GM12878 (cell line): ENCODE measurements at regions of chr19 and their contacts with region 1.

Region 1: DNA sequence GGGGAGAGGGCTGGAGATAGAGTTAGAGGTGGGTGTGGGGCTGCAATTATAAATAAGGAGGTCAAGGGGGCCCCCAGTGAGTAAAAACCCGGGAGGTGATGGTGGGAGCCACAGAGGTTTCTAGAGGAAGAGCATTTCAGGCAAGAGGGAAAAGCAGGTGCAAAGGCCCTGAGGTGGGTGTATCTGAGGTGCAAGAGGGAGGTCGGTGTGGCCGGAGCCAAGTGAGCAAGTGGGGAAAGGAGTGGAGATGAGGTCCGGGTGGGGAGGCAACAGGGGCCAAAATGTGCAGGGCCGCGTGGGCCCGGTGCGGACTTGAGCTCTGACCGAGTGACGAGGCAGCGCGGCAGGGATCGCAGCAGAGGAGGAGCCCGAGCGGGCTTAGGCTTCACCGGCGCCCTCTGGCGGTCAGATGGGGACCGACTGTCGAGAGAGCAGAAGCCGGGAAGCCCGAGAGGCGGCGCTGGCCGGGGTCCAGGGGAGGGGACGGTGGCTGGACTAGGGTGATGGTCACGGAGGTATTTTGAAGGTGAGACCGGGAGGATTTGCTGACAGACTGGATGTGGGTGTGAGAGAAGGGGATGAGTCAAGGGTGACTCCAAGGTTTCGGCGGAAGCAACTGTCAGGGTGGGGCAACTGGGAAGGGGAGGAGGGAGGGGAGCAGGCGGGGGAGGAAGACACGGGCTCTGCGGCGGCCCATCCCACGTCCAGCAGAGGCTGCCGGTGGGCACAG is 17.7 kb upstream of the SPACA4 start:
- DNase-seq: no peak
- ATAC-seq: peak; percentile 92
- H3K4me3 ChIP-seq: no peak overlapping the region
- H3K27ac ChIP-seq: no peak overlapping the region
- H3K4me1 ChIP-seq: peaks cover 4% of the 10 kb centered on the region
- H3K27me3 ChIP-seq: peaks cover 0 to 2% of the 10 kb centered on the region in 2 experiments; a peak in 1 of 4 replicates
- CTCF ChIP-seq: peak; percentile 93 to 97 (median 94)
- EP300 ChIP-seq: no peak
- POLR2A ChIP-seq: no peak
- RAD21 ChIP-seq: peak; percentile 51

Region 2: GRCh38 chr19:48315712-48316111 is 273.1 kb before region 1 on chr19:
- CTCF ChIA-PET with region 1: interaction called, 36 read pairs
- POLR2A ChIA-PET with region 1: interaction called, 4 read pairs
- RAD21 ChIA-PET with region 1: interaction called, 27 read pairs
- SMC1A ChIA-PET with region 1: interaction called, 15 read pairs
- in situ Hi-C with region 1: loop called (anchors 5 kb)
- intact Hi-C with region 1: no loop called
- DNase-seq: no peak
- ATAC-seq: 0 out of 3 replicates have a peak, but pooled peaks have one; percentile 9
- H3K4me3 ChIP-seq: no peak overlapping the region
- H3K27ac ChIP-seq: no peak overlapping the region
- H3K4me1 ChIP-seq: peaks cover 8% of the 10 kb centered on the region
- H3K27me3 ChIP-seq: no peaks in the 10 kb centered on the region
- CTCF ChIP-seq: no peak
- EP300 ChIP-seq: no peak
- POLR2A ChIP-seq: no peak
- RAD21 ChIP-seq: no peak

Region 3: GRCh38 chr19:48333467-48334384 is 255.1 kb before region 1 on chr19:
- CTCF ChIA-PET with region 1: interaction called, 24 read pairs
- POLR2A ChIA-PET with region 1: interaction called, 4 read pairs
- RAD21 ChIA-PET with region 1: interaction called, 34 read pairs
- SMC1A ChIA-PET with region 1: interaction called, 6 read pairs
- in situ Hi-C with region 1: no loop called
- intact Hi-C with region 1: no loop called
- DNase-seq: peak; percentile 82
- ATAC-seq: peak; percentile 83
- H3K4me3 ChIP-seq: peak overlapping the region; percentile 77
- H3K27ac ChIP-seq: peak overlapping the region; percentile 98
- H3K4me1 ChIP-seq: peaks cover 28% of the 10 kb centered on the region
- H3K27me3 ChIP-seq: no peaks in the 10 kb centered on the region
- CTCF ChIP-seq: peak; percentile 85 to 98 (median 95); a peak in 5 of 6 replicates
- EP300 ChIP-seq: no peak
- POLR2A ChIP-seq: peak; percentile 84
- RAD21 ChIP-seq: peak; percentile 91

Region 4: DNA sequence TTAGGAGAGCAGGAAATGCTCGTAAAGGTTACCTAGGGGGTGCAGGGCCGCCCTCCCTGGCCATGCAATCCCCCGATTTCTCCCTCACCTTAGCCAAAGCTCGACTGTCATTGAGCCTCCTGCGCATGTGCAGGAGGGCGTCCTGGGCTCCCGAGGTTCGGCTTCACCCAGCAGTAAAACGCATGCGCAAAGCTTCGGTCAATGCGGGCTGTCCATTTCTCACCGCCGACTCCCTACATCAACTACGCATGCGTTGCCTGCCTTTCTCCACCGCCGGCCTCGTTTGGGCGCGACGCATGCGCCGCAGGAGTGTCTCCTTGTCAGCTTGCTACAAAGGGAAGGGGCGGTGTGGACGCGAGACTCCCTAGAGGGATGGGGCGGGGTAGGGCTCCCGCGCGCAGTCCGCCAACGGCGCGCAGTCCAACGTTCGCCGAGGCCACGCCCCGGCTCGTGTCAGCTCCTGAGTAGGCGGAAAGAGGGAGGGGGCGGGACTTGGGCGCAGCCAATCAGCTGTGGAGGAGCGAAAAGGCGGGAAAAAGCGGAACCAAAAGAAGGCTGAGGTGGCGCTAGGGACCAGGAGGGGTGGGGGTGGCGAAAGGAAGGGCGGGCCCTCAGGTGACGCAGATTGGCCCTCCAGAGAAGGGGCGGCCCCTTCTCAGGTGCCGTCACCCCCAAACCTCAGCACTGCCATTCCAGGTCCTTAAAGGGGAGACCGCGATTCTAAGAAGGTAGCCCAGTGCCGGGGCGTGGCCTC is 224.8 kb before region 1 on chr19 and contains the starts of genes SYNGR4 and TMEM143:
- CTCF ChIA-PET with region 1: interaction called, 15 read pairs
- POLR2A ChIA-PET with region 1: no interaction called
- RAD21 ChIA-PET with region 1: no interaction called
- SMC1A ChIA-PET with region 1: interaction called, 3 read pairs
- in situ Hi-C with region 1: no loop called
- intact Hi-C with region 1: no loop called
- DNase-seq: peak; percentile 99
- ATAC-seq: peak; percentile 90
- H3K4me3 ChIP-seq: peak within 1 kb of the TSS; percentile 82
- H3K27ac ChIP-seq: peak within 1 kb of the TSS; percentile 99
- H3K4me1 ChIP-seq: peaks cover 9% of the 10 kb centered on the region; the same call in 1 of the 2 replicates
- H3K27me3 ChIP-seq: no peaks in the 10 kb centered on the region
- CTCF ChIP-seq: no peak
- EP300 ChIP-seq: peak in 1 of 2 experiments; percentile 33; a peak in 1 of 4 replicates
- POLR2A ChIP-seq: peak; percentile 70
- RAD21 ChIP-seq: no peak
- polyA plus RNA-seq, gene SYNGR4: not detected
- polyA plus RNA-seq, gene TMEM143: 1.5 to 2.4 TPM

Region 5: DNA sequence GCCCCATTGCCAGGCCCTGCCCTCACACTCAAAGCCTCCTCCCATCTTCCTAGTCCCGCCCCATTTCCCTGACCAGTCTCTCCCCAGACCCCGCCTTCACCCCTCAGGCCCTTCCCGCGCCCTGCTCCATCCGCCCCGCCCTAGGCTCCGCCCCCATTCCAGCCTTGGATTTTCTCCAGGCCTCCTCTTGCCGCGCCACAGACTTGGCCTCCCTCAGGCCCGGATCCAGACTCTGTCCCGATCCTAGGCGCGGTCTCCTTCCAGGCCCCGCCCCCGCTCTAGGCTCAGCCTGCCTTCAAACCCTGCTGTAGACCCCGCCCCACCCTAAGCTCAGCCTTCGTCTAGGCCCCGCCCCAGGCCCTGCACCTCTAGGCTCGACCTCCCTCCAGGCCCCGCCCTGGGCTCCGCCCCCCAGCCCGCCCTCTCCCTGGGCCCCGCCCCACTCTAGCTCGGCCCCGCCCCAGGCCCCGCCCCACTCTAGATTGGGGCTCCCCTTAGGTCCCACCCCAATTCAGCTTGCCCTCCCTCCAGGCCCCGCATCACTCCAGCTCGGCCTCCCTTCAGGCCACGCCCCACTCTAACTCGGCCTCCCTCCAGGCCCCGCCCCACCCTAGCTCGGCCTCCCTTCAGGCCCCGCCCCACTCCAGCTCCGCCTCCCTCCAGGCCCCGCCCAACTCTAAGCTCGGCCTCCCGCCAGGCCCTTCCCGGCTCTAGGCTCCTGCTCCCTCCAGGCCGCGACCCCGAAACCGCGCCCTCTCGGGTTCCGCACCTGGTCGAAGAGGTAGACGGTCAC is 95.7 kb before region 1 on chr19:
- CTCF ChIA-PET with region 1: interaction called, 155 read pairs
- POLR2A ChIA-PET with region 1: no interaction called
- RAD21 ChIA-PET with region 1: interaction called, 42 read pairs
- SMC1A ChIA-PET with region 1: interaction called, 25 read pairs
- in situ Hi-C with region 1: no loop called
- intact Hi-C with region 1: loop called (anchors 1 kb)
- DNase-seq: peak; percentile 48
- ATAC-seq: peak; percentile 85
- H3K4me3 ChIP-seq: peak overlapping the region; percentile 57; the same call in 1 of the 2 replicates
- H3K27ac ChIP-seq: no peak overlapping the region
- H3K4me1 ChIP-seq: peaks cover 20% of the 10 kb centered on the region
- H3K27me3 ChIP-seq: peaks cover 1 to 3% of the 10 kb centered on the region in 2 experiments; a peak in 2 of 4 replicates
- CTCF ChIP-seq: no peak
- EP300 ChIP-seq: no peak
- POLR2A ChIP-seq: peak; percentile 68
- RAD21 ChIP-seq: no peak

Region 6: DNA sequence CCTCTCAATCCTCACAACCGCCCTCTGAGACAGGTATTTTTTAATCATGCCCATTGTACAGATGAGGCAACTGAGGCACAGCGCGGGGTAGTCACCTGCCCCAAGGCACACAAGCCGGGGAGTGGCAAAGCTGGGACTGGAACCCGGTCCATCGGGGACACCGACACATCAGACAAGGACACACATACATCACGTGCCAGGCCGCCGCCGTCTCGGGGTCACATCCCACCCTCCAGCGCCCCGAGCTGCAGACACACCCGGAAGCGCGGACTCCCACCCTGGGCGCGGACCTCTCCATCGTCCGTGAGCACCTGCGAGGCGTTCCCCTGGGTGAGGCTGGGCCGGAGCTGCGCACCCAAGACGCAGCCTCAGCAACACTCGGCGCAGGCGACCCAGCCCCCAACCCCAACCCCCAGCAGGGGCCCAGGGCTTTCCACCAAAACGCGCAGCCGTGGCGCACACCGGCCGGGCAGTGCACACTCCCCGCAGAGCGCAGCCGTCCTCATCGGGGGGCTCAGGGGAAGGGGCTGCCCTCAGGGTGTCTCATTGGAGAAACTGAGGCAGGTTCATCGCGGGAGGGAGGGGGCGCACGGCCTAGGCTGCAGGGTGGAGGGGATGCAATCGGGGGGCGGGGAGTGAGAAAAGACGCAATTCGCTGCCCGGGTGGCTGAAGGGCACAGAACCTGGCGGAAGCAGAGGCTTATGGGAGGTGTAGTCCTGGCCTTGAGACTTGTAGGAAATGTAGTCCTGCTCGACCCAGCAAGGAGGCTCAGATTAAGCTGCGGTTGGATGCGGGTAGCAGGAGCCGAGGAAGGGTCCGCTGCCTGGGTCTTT is 75.3 kb before region 1 on chr19:
- CTCF ChIA-PET with region 1: interaction called, 131 read pairs
- POLR2A ChIA-PET with region 1: no interaction called
- RAD21 ChIA-PET with region 1: interaction called, 69 read pairs
- SMC1A ChIA-PET with region 1: interaction called, 68 read pairs
- in situ Hi-C with region 1: loop called (anchors 5 kb)
- intact Hi-C with region 1: no loop called
- DNase-seq: no peak
- ATAC-seq: peak; percentile 96
- H3K4me3 ChIP-seq: peak overlapping the region; percentile 93
- H3K27ac ChIP-seq: no peak overlapping the region
- H3K4me1 ChIP-seq: peaks cover 18% of the 10 kb centered on the region
- H3K27me3 ChIP-seq: peaks cover 2 to 4% of the 10 kb centered on the region in 2 experiments; a peak in 3 of 4 replicates
- CTCF ChIP-seq: no peak
- EP300 ChIP-seq: no peak
- POLR2A ChIP-seq: no peak; the same call in 1 of the 2 replicates
- RAD21 ChIP-seq: no peak

Region 7: GRCh38 chr19:48553676-48554386 is 35.0 kb before region 1 on chr19:
- CTCF ChIA-PET with region 1: no interaction called
- POLR2A ChIA-PET with region 1: no interaction called
- RAD21 ChIA-PET with region 1: no interaction called
- SMC1A ChIA-PET with region 1: no interaction called
- in situ Hi-C with region 1: no loop called
- intact Hi-C with region 1: no loop called
- DNase-seq: no peak
- ATAC-seq: no peak
- H3K4me3 ChIP-seq: no peak overlapping the region
- H3K27ac ChIP-seq: no peak overlapping the region
- H3K4me1 ChIP-seq: no peaks in the 10 kb centered on the region
- H3K27me3 ChIP-seq: no peaks in the 10 kb centered on the region; a peak in 1 of 4 replicates
- CTCF ChIP-seq: no peak
- EP300 ChIP-seq: no peak
- POLR2A ChIP-seq: no peak
- RAD21 ChIP-seq: no peak

Region 8: GRCh38 chr19:48608798-48609263 is 20.0 kb after region 1 on chr19:
- CTCF ChIA-PET with region 1: interaction called, 26 read pairs
- POLR2A ChIA-PET with region 1: interaction called, 5 read pairs
- RAD21 ChIA-PET with region 1: interaction called, 14 read pairs
- SMC1A ChIA-PET with region 1: interaction called, 5 read pairs
- in situ Hi-C with region 1: no loop called
- intact Hi-C with region 1: no loop called
- DNase-seq: no peak
- ATAC-seq: peak; percentile 93
- H3K4me3 ChIP-seq: no peak overlapping the region
- H3K27ac ChIP-seq: no peak overlapping the region
- H3K4me1 ChIP-seq: no peaks in the 10 kb centered on the region
- H3K27me3 ChIP-seq: no peaks in the 10 kb centered on the region
- CTCF ChIP-seq: peak; percentile 74 to 84 (median 82); a peak in 5 of 6 replicates
- EP300 ChIP-seq: no peak
- POLR2A ChIP-seq: no peak
- RAD21 ChIP-seq: peak; percentile 74